Activated B cell treated with CpG ODN at 0.5 μM for 24 hours (primary cell): ENCODE measurements at regions of chr13 and their contacts with region 1.

Region 1: DNA sequence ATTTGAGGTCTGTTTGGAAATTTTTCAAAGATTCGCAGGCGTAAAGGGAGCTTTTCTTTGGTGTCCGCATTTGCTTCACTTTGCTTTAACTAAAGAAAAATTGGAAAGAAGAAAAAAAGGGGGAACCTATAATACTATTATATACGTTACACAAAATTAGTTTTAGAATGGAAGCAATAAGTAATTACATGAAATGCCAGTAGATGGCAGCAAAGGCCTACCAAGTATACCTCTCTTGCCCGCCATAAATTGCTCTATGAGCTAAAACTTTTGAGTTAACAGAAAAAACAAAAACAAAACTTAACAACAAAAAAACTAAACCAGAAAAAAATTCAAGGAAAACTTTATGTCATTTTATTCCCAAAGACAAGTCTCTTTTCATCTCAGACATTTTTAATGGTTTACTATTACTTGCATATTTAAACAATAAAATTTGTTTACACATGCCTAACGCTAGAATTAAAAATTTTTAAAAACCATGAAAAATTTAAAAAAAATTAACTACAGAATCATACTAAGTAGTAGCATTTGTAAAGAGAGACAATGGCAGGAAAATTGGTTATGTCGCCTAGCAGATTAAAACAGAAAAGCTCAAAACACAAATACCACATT is 271.4 kb downstream of the NALCN start:
- DNase-seq: no peak
- ATAC-seq: no peak
- H3K4me3 Mint-ChIP-seq: no peak overlapping the region
- H3K27ac Mint-ChIP-seq: no peak overlapping the region
- H3K4me1 Mint-ChIP-seq: no peaks in the 10 kb centered on the region
- H3K27me3 Mint-ChIP-seq: peaks cover 19% of the 10 kb centered on the region
- CTCF ChIP-seq: peak; percentile 36

Region 2: GRCh38 chr13:100409132-100409531 is 735.8 kb before region 1 on chr13:
- CTCF ChIA-PET with region 1: no interaction called
- POLR2A ChIA-PET with region 1: no interaction called
- intact Hi-C with region 1: no loop called
- DNase-seq: no peak
- ATAC-seq: no peak
- H3K4me3 Mint-ChIP-seq: no peak overlapping the region
- H3K27ac Mint-ChIP-seq: no peak overlapping the region
- H3K4me1 Mint-ChIP-seq: no peaks in the 10 kb centered on the region
- H3K27me3 Mint-ChIP-seq: no peaks in the 10 kb centered on the region
- CTCF ChIP-seq: no peak

Region 3: DNA sequence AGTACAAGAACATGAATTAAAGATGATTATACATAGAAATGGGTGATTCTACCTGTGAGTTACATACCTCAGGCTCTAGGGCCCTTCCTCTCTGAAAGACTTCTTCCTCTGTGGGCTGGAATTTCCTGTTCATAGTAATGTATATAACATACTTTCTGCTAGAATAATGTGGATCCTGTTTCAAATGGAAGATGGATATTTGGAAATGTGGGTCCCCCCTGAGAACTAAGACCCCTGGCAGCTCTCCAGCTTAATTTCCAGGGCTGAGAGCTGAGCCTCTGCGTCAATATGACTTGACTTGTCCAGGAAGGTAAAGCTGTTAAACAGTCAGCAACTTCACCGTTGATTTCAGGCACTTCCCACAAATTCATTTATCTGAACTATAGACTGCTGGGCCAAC is 24.9 kb before region 1 on chr13:
- CTCF ChIA-PET with region 1: no interaction called
- POLR2A ChIA-PET with region 1: no interaction called
- intact Hi-C with region 1: no loop called
- DNase-seq: no peak
- ATAC-seq: no peak
- H3K4me3 Mint-ChIP-seq: no peak overlapping the region
- H3K27ac Mint-ChIP-seq: no peak overlapping the region
- H3K4me1 Mint-ChIP-seq: no peaks in the 10 kb centered on the region
- H3K27me3 Mint-ChIP-seq: peaks cover 4% of the 10 kb centered on the region
- CTCF ChIP-seq: no peak

Region 4: GRCh38 chr13:101360525-101360924 is 215.6 kb after region 1 on chr13:
- CTCF ChIA-PET with region 1: no interaction called
- POLR2A ChIA-PET with region 1: no interaction called
- intact Hi-C with region 1: loop called (anchors 5 kb)
- DNase-seq: no peak
- ATAC-seq: no peak
- H3K4me3 Mint-ChIP-seq: no peak overlapping the region
- H3K27ac Mint-ChIP-seq: no peak overlapping the region
- H3K4me1 Mint-ChIP-seq: no peaks in the 10 kb centered on the region
- H3K27me3 Mint-ChIP-seq: no peaks in the 10 kb centered on the region
- CTCF ChIP-seq: no peak

Region 5: GRCh38 chr13:101757446-101758039 is 612.6 kb after region 1 on chr13:
- CTCF ChIA-PET with region 1: interaction called, 11 read pairs
- POLR2A ChIA-PET with region 1: no interaction called
- intact Hi-C with region 1: loop called (anchors 1 kb)
- DNase-seq: no peak
- ATAC-seq: no peak
- H3K4me3 Mint-ChIP-seq: no peak overlapping the region
- H3K27ac Mint-ChIP-seq: no peak overlapping the region
- H3K4me1 Mint-ChIP-seq: no peaks in the 10 kb centered on the region
- H3K27me3 Mint-ChIP-seq: no peaks in the 10 kb centered on the region
- CTCF ChIP-seq: no peak

Region 6: GRCh38 chr13:102460801-102461200 is 1315.9 kb after region 1 on chr13:
- CTCF ChIA-PET with region 1: interaction called, 3 read pairs
- POLR2A ChIA-PET with region 1: no interaction called
- intact Hi-C with region 1: loop called (anchors 1 kb)
- DNase-seq: no peak
- ATAC-seq: no peak
- H3K4me3 Mint-ChIP-seq: no peak overlapping the region
- H3K27ac Mint-ChIP-seq: no peak overlapping the region
- H3K4me1 Mint-ChIP-seq: peaks cover 2% of the 10 kb centered on the region
- H3K27me3 Mint-ChIP-seq: peaks cover 6% of the 10 kb centered on the region
- CTCF ChIP-seq: no peak

Region 7: GRCh38 chr13:102657630-102658029 is 1512.7 kb after region 1 on chr13:
- CTCF ChIA-PET with region 1: no interaction called
- POLR2A ChIA-PET with region 1: no interaction called
- intact Hi-C with region 1: loop called (anchors 10 kb)
- DNase-seq: no peak
- ATAC-seq: no peak
- H3K4me3 Mint-ChIP-seq: no peak overlapping the region
- H3K27ac Mint-ChIP-seq: no peak overlapping the region
- H3K4me1 Mint-ChIP-seq: no peaks in the 10 kb centered on the region
- H3K27me3 Mint-ChIP-seq: no peaks in the 10 kb centered on the region
- CTCF ChIP-seq: no peak